Breast epithelium (tissue), 4 donors: ENCODE measurements at regions of chr11 and their contacts with region 1.

Region 1: DNA sequence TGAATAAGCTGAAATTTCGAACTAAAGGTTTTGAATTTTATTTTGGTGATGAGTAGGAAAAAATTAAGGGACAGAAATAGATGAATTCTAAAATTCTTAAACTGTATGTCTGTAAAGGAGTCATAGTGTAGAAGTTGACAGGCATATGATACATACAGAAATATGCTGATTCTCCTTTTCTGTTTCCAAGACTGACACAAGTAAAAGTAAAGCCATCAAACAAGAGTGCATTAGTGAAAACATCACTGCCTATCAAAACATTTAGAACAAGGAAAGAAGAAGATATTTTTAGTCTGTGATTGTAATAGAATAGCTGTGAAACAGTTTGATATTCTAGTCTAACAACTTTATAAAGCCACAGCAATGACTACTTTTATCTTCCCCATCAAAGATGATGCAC is 1318.0 kb upstream of the TENM4 start:
- DNase-seq: no peak
- H3K4me3 ChIP-seq: no peak overlapping the region
- H3K27ac ChIP-seq: no peak overlapping the region
- H3K4me1 ChIP-seq: no peaks in the 10 kb centered on the region
- H3K27me3 ChIP-seq: no peaks in the 10 kb centered on the region
- CTCF ChIP-seq: no peak
- POLR2A ChIP-seq: no peak

Region 2: GRCh38 chr11:80779905-80780605 is 21.3 kb after region 1 on chr11:
- intact Hi-C with region 1: loop called (anchors 1 kb)
- DNase-seq: no peak
- H3K4me3 ChIP-seq: no peak overlapping the region
- H3K27ac ChIP-seq: no peak overlapping the region
- H3K4me1 ChIP-seq: no peaks in the 10 kb centered on the region
- H3K27me3 ChIP-seq: no peaks in the 10 kb centered on the region
- CTCF ChIP-seq: no peak
- POLR2A ChIP-seq: no peak